Vagina (tissue), 2 donors: ENCODE measurements at regions of chr7 and their contacts with region 1.

Region 1: DNA sequence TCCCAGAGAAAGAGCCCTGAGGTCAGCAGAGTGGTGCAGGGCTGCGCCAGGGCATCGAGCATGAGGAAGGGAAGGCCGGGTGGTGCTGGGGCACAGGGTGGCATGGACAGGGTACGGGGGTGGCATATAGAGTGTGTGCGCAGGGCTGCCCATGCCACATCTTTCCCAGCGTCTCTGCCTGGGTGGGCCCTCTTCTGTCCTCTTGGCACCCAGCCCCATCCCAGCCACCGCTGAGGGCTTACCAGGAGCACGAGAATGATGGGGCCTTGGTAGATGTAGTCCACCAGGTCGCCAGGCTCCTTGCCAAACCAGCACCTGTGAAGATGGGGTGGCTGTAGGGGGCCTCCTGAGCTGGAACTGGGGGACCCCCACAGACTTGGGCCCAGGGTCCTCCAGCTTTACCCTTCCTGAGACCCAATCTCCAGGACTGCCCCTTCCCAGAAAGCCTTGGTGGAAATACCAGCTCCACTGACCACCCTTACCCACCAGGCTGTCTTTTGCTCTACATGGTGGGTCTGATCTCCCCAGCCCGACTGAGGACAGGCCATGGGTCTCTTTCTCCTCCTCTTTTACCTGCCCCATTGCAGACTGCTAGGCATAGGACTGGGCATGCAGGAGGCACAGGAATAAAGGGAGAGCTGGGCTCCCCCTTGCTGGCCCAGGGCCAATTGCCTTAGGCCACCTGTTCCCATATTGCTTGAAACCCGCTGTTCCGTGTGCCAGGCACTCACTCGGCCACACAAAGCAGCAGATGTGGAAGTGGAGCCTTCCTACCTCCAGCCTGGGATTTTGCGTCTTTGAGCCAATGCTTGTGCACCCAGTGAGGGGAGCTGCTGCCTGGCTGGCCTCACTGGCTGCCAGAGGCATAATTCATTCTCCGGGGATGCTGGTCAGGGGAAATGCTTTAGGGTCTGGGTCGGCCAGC is 21.7 kb downstream of the CRHR2 start:
- DNase-seq: no peak
- H3K4me3 ChIP-seq: no peak overlapping the region
- H3K27ac ChIP-seq: no peak overlapping the region
- H3K4me1 ChIP-seq: no peaks in the 10 kb centered on the region
- H3K27me3 ChIP-seq: no peaks in the 10 kb centered on the region
- CTCF ChIP-seq: no peak
- POLR2A ChIP-seq: no peak

Region 2: DNA sequence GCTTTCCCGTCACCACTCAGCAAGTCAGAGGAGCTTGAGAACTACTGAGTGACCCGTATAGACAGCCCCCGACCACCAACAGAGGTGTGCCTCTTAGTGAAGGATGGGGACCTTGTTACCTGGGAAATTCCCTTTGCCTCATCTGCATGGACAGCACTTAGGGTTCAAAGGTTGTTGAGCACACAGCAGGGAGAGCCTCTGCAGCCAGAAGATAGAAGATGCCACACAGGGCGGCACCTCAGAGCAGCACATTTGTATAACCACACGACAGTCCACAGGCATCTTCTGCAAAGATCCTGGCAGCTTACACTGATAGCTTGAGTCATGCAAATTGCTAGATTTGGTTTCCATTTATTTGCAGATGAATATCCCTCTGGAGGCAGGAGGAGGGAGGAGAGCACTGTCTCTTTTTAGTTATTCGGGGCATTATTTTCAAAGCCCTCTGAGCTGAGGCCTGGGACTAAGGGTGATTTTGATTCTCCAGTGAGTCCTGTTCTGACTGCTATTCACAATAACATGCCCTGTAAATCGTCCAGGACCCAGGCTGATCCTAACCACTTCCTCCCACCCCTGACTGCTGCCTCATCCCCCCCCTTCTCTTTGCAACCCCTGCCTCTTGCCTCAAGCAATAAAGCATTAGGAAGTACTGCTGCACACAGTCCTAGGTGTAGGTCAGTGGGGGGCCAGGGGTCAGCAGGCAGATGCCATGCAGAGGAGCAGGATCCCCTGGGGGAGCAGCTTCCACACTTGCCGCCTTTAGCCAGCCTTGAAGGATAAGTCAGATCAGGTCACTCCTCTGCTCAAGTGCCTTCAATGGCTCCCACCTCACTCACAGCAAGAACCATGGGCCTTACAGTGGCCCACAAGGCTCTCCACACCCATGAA is 66.7 kb after region 1 on chr7:
- intact Hi-C with region 1: loop called (anchors 10 kb)
- DNase-seq: no peak
- H3K4me3 ChIP-seq: no peak overlapping the region
- H3K27ac ChIP-seq: no peak overlapping the region
- H3K4me1 ChIP-seq: no peaks in the 10 kb centered on the region
- H3K27me3 ChIP-seq: no peaks in the 10 kb centered on the region
- CTCF ChIP-seq: no peak
- POLR2A ChIP-seq: no peak